ENCODE measurements at regions of chr7 and their contacts with region 1.

Region 1: GRCh38 chr7:50349963-50350944 is 45.7 kb downstream of the IKZF1 start:
- DNase-seq: no peak
- ATAC-seq: peak; percentile 76
- H3K4me3 Mint-ChIP-seq: peak overlapping the region; percentile 42
- H3K27ac Mint-ChIP-seq: peak overlapping the region; percentile 88
- H3K4me1 Mint-ChIP-seq: peaks cover 95% of the 10 kb centered on the region
- H3K27me3 Mint-ChIP-seq: no peaks in the 10 kb centered on the region
- CTCF ChIP-seq: no peak

Region 2: GRCh38 chr7:50147951-50148808 is 202.1 kb before region 1 on chr7:
- CTCF ChIA-PET with region 1: interaction called, 3 read pairs
- POLR2A ChIA-PET with region 1: interaction called, 7 read pairs
- intact Hi-C with region 1: loop called (anchors 1 kb)
- DNase-seq: no peak
- ATAC-seq: peak; percentile 77
- H3K4me3 Mint-ChIP-seq: peak overlapping the region; percentile 46
- H3K27ac Mint-ChIP-seq: peak overlapping the region; percentile 95
- H3K4me1 Mint-ChIP-seq: peaks cover 93% of the 10 kb centered on the region
- H3K27me3 Mint-ChIP-seq: no peaks in the 10 kb centered on the region
- CTCF ChIP-seq: no peak

Region 3: DNA sequence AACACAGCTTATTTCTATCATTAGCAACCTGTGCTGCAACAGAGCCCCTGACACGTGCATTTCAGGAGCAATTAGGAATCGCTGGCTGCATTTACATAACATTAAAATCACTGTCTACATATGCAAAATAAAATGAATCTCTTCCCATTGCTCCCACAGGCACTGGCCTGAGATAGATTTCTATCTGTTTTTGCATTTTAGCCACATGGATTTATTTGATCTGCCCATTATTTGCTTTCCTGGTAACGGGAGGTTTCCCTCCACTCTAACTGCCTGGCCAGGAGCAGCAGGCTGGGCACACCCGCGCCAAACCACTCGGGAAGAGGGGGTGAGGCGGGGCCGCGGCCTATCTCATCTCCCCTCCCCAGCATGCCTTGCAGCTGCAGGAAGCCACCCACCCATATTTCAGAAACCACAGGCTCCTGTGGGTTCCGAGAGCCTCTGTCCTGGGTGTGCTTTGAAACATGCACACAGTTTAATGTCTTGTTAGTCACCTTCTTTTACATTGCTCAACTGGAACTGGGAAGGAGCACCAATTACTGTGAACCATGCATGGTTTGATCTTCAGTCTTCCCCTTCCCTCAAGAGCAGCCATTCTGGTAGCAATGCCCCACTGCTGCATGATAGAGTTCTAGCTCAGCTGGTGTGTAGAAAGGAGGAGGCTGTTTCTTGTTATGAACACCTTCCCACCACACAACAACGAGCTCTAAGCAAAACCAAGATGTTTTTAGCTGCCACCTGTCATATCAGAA is 83.4 kb before region 1 on chr7:
- CTCF ChIA-PET with region 1: interaction called, 3 read pairs
- POLR2A ChIA-PET with region 1: interaction called, 7 read pairs
- intact Hi-C with region 1: loop called (anchors 5 kb)
- DNase-seq: no peak
- ATAC-seq: peak; percentile 66
- H3K4me3 Mint-ChIP-seq: peak overlapping the region; percentile 78
- H3K27ac Mint-ChIP-seq: peak overlapping the region; percentile 87
- H3K4me1 Mint-ChIP-seq: peaks cover 99% of the 10 kb centered on the region
- H3K27me3 Mint-ChIP-seq: no peaks in the 10 kb centered on the region
- CTCF ChIP-seq: no peak

Region 4: DNA sequence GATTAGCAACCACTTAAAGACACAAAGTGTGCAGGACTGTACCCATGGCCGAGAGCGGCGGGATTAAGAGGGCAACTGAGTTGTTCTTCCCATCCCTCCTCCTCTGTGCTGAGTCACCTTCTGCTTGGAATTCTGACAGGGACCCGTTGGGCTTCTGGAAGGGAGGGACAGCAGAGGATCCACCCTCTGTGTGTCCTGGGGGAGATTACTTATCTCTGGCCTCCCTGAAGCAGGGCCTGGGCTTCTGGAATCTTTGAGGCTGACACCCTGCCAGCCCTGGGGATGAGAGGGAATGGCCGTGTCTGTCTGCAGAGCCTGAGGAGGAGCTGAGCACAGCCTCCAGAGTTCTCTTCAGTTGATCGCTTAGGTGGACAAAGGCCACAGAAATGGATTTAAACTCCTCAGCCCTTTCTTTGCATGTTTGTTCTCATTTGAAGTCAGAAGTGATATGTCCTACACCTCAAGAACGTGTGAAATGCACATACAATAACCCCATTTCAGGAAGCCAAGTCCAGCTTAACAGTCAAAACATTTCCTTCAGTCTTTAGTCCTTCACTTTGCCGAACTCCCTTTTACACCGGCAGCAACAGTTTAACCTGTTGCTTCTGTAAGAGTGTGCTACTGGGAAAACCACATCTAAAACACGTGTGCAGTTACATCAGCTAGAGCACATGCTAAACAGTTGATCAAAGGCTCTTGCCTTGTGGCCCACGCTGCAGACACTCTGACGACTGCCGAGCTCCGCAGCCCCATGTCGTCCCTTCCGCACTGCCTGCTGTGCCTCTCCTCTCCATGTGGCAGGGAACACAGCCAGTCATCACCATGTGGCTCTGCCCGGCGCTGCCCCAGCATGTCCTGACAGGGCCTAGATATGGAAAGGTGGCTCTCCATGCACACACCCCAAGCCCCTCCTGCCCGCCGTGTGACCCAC is 10.0 kb after region 1 on chr7:
- CTCF ChIA-PET with region 1: interaction called, 4 read pairs
- POLR2A ChIA-PET with region 1: interaction called, 11 read pairs
- intact Hi-C with region 1: no loop called
- DNase-seq: no peak
- ATAC-seq: no peak
- H3K4me3 Mint-ChIP-seq: no peak overlapping the region
- H3K27ac Mint-ChIP-seq: peak overlapping the region; percentile 80
- H3K4me1 Mint-ChIP-seq: peaks cover 93% of the 10 kb centered on the region
- H3K27me3 Mint-ChIP-seq: no peaks in the 10 kb centered on the region
- CTCF ChIP-seq: no peak

Region 5: DNA sequence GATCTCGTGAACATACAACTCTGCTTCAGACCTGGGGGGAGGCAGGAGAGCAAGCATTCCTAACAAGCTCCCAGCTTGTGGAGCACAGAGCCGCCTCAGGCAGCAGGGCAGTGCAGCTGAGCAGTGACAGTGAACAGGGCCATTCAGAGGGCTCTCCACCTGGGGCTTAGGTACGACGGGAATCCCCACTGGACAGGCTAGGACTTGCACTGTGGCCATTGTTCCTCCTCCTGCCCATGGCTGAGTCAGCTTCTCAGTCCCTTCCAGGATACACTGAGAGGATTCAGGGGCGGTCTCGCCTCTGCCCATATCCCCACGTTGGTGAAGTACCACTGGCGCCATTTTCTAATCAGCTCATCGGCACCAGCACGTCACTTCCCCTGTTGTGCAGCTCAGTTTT is 28.8 kb after region 1 on chr7:
- CTCF ChIA-PET with region 1: no interaction called
- POLR2A ChIA-PET with region 1: no interaction called
- intact Hi-C with region 1: no loop called
- DNase-seq: no peak
- ATAC-seq: no peak
- H3K4me3 Mint-ChIP-seq: no peak overlapping the region
- H3K27ac Mint-ChIP-seq: peak overlapping the region; percentile 71
- H3K4me1 Mint-ChIP-seq: peaks cover 84% of the 10 kb centered on the region
- H3K27me3 Mint-ChIP-seq: no peaks in the 10 kb centered on the region
- CTCF ChIP-seq: no peak

Region 6: GRCh38 chr7:50409856-50410745 is 59.8 kb after region 1 on chr7:
- CTCF ChIA-PET with region 1: no interaction called
- POLR2A ChIA-PET with region 1: interaction called, 12 read pairs
- intact Hi-C with region 1: no loop called
- DNase-seq: peak; percentile 58
- ATAC-seq: peak; percentile 70
- H3K4me3 Mint-ChIP-seq: peak overlapping the region; percentile 56
- H3K27ac Mint-ChIP-seq: peak overlapping the region; percentile 94
- H3K4me1 Mint-ChIP-seq: peaks cover 98% of the 10 kb centered on the region
- H3K27me3 Mint-ChIP-seq: no peaks in the 10 kb centered on the region
- CTCF ChIP-seq: no peak